Lower lobe of right lung (tissue), 2 donors: ENCODE measurements at regions of chr17 and their contacts with region 1.

Region 1: DNA sequence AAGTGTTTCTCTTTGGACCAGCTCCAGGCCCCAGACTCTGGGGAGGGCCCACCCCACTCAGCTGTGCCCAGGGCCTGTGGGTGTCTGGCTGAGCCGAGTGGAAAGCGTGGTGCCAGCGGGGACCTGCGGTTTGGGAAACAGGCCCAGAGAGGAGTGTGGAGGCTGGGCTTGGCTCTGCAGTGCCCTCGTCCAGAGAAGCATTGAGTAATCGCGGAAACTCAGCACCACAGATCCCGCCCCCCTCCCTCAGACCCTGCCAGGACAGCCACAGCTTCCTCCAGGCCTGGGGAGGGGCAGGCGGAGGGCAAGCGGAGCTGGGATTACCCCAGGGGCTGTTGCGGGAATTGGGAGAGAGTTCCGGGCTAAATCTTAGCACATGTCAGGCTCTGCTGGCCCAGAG is 14.6 kb upstream of the PITPNA start:
- DNase-seq: peak; percentile 96
- ATAC-seq: peak; percentile 90 to 93
- H3K4me3 ChIP-seq: peak overlapping the region; percentile 19
- H3K27ac ChIP-seq: peak overlapping the region; percentile 90
- H3K4me1 ChIP-seq: peaks cover 57% of the 10 kb centered on the region
- H3K27me3 ChIP-seq: no peaks in the 10 kb centered on the region
- CTCF ChIP-seq: no peak

Region 2: GRCh38 chr17:1628856-1629646 is 51.9 kb after region 1 on chr17:
- intact Hi-C with region 1: loop called (anchors 5 kb)
- DNase-seq: peak; percentile 95
- ATAC-seq: peak; percentile 92 to 93
- H3K4me3 ChIP-seq: peak overlapping the region; percentile 94
- H3K27ac ChIP-seq: peak overlapping the region; percentile 89
- H3K4me1 ChIP-seq: peaks cover 50% of the 10 kb centered on the region
- H3K27me3 ChIP-seq: no peaks in the 10 kb centered on the region
- CTCF ChIP-seq: peak; percentile 47